ENCODE measurements at regions of chr11 and their contacts with region 1.

Region 1: GRCh38 chr11:117020287-117020686 is 77.9 kb downstream of the SIK3 start:
- DNase-seq: peak; percentile 78
- ATAC-seq: peak; percentile 46
- H3K4me3 Mint-ChIP-seq: no peak overlapping the region
- H3K27ac Mint-ChIP-seq: peak overlapping the region; percentile 63
- H3K4me1 Mint-ChIP-seq: peaks cover 66% of the 10 kb centered on the region
- H3K27me3 Mint-ChIP-seq: no peaks in the 10 kb centered on the region
- CTCF ChIP-seq: no peak

Region 2: DNA sequence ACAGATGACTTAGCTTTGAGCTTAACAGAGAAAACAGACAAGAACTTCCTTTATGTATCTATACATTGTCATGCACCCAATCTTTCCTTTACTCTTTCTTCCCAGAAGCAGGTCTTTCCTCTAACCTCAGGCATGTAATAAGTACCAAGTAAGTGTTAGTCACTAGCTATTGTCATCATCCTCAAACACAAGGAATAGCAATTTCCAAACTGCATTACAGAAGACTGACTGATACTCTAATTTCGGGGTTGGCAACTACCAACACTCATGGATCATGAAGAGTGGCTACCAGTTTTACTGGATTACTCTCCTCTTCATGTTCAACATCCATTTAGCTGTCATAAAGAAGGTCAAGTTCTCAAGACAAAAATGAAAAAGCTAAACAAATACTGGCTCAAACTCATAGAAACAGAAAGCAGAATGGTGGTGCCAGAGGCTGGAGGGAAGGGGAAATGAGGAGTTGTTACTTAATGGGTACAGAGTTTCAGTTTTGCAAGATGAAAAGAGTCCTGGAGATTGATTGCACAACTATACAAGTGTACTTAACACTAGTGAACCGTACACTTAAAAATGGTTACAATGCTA is 33.7 kb before region 1 on chr11:
- CTCF ChIA-PET with region 1: interaction called, 3 read pairs
- POLR2A ChIA-PET with region 1: interaction called, 3 read pairs
- intact Hi-C with region 1: loop called (anchors 5 kb)
- DNase-seq: peak; percentile 34
- ATAC-seq: peak; percentile 71
- H3K4me3 Mint-ChIP-seq: peak overlapping the region; percentile 44
- H3K27ac Mint-ChIP-seq: peak overlapping the region; percentile 60
- H3K4me1 Mint-ChIP-seq: peaks cover 67% of the 10 kb centered on the region
- H3K27me3 Mint-ChIP-seq: no peaks in the 10 kb centered on the region
- CTCF ChIP-seq: no peak

Region 3: DNA sequence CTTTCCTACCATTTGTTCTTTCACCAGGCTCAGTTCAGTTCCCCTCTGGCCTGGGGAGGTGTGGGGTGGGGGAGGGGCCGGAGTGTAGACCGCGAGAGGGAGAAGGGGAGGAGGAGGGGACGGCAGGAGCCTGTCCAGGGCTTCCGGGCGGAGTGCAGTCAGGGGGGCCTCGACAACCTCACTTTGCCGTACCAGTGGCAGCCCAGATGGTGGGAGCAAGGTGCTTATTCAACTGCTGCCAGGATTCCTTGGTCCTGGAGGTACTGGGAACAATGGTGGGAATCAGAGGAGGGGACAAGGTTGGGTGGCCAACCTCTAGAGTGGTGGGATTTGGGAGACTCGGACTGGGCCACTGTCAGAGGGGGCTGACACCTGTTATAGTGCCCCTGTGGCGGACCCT is 294.6 kb after region 1 on chr11:
- CTCF ChIA-PET with region 1: no interaction called
- POLR2A ChIA-PET with region 1: no interaction called
- intact Hi-C with region 1: no loop called
- DNase-seq: no peak
- ATAC-seq: no peak
- H3K4me3 Mint-ChIP-seq: peak overlapping the region; percentile 38
- H3K27ac Mint-ChIP-seq: no peak overlapping the region
- H3K4me1 Mint-ChIP-seq: peaks cover 4% of the 10 kb centered on the region
- H3K27me3 Mint-ChIP-seq: peaks cover 25% of the 10 kb centered on the region
- CTCF ChIP-seq: no peak